Kidney (tissue), 22 donors: ENCODE measurements at regions of chr3 and their contacts with region 1.

Region 1: DNA sequence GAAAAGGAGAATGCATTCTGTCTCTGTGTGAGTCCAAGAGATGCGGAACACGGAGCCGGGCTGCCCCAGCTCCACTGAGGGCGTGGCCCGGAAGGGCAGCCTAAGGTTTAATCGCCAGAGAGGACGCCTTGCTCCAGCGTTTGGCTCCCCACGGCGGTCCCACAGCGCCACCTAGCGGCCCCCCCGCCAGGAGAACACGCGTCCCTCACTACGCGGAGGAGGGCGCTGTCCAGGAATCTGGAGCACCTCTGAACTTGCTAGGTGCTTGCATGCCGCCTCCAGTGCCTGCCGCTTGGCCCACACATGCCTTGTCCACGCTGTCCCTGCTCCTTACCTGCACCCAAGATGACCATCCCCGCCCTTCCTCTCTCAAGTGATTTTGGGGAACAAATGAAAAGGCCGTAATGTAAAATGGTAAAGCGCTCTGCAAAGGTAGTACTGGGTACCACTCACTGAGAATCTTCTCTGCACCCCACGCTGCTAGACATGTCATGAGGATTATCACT is 14.4 kb upstream of the MRPS22 start:
- DNase-seq: peak; percentile 88 to 95 (median 93)
- H3K4me3 ChIP-seq: no peak overlapping the region
- H3K27ac ChIP-seq: no peak overlapping the region
- H3K4me1 ChIP-seq: no peaks in the 10 kb centered on the region
- H3K27me3 ChIP-seq: no peaks in the 10 kb centered on the region
- CTCF ChIP-seq: peak; percentile 99

Region 2: DNA sequence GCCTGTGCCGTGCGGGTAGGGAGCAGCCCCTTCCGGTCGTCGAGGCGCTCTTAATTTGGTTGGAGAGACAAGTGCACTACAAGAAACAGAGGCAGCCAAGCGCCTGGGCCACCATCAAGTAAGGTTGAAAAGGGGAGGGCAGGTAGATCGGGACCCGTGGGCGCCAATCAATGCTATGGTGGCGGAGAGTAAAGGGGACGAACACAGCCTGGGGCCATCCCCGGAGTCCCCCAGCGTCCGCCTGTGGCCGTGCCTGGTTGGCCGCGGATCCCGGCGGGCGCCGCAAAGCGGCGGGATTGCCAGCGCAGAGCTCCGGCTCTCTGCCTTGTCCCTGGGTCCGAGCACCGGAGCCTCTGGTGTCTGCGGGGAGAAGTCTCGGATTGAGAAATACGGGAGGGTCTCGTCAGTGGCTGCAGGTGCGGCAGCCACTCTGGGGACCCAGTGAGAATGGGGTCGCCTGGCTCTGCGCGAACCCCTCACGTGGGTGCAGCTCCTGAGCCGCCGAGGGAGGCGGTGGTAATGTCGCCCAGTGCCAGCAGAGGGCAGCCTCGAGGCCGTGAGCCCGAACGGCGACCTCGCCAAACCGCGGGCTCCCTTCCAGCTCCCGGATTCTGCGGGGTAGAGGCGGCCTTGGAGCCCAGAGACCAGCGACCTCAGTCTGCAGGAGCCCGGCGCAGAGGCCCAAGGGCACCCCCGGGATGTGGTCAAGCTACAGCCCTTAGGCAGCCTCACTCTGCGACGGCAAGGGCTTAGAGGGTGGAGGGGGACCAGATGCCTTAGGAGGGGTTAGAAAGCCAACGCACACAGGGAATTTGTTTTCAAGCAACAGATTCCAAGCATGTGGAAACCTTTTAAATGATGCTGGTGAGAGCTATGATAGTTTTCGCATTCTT is 393.3 kb before region 1 on chr3:
- intact Hi-C with region 1: loop called (anchors 10 kb)
- DNase-seq: peak; percentile 73 to 86 (median 80)
- H3K4me3 ChIP-seq: peak overlapping the region in 1 of 3 donors; percentile 55
- H3K27ac ChIP-seq: no peak overlapping the region
- H3K4me1 ChIP-seq: peaks cover 0 to 21% (median 0%) of the 10 kb centered on the region in 3 donors
- H3K27me3 ChIP-seq: peaks cover 50% of the 10 kb centered on the region
- CTCF ChIP-seq: peak; percentile 81

Region 3: GRCh38 chr3:139043554-139044365 is 285.6 kb before region 1 on chr3:
- intact Hi-C with region 1: no loop called
- DNase-seq: peak in 1 of 5 donors; percentile 68
- H3K4me3 ChIP-seq: no peak overlapping the region
- H3K27ac ChIP-seq: no peak overlapping the region
- H3K4me1 ChIP-seq: no peaks in the 10 kb centered on the region
- H3K27me3 ChIP-seq: no peaks in the 10 kb centered on the region
- CTCF ChIP-seq: no peak

Region 4: GRCh38 chr3:139107424-139108252 is 221.8 kb before region 1 on chr3:
- intact Hi-C with region 1: loop called (anchors 10 kb)
- DNase-seq: peak in 4 of 5 donors; percentile 10 to 47 (median 22)
- H3K4me3 ChIP-seq: no peak overlapping the region
- H3K27ac ChIP-seq: no peak overlapping the region
- H3K4me1 ChIP-seq: no peaks in the 10 kb centered on the region
- H3K27me3 ChIP-seq: no peaks in the 10 kb centered on the region
- CTCF ChIP-seq: no peak